CD4-positive, alpha-beta T cell (primary cell): ENCODE measurements at regions of chr13 and their contacts with region 1.

Region 1: DNA sequence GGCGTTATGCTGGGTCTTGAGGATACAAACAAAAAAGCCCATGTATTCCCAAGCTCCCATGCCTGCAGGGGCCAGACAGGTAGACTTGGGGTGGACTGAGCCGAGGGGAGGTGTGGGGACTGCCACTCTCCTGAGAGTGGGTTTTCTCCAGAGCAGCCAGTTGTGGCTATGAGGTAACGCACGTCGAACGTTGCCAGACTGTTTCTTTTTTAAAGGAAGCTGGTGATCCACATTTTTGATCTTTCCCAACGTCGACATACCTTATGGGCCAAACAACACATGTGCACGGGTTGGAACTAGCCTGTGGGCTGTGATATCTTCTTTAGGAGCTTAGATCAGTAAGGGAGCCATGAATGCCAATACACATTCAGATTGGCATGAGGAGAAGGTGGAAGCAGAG is 60.6 kb downstream of the LMO7 start:
- DNase-seq: no peak
- ATAC-seq: no peak
- H3K4me3 ChIP-seq: no peak overlapping the region
- H3K4me3 Mint-ChIP-seq: no peak overlapping the region
- H3K27ac ChIP-seq: no peak overlapping the region
- H3K27ac Mint-ChIP-seq: no peak overlapping the region
- H3K4me1 ChIP-seq: no peaks in the 10 kb centered on the region
- H3K4me1 Mint-ChIP-seq: no peaks in the 10 kb centered on the region
- H3K27me3 ChIP-seq: no peaks in the 10 kb centered on the region
- H3K27me3 Mint-ChIP-seq: no peaks in the 10 kb centered on the region
- CTCF ChIP-seq: no peak

Region 2: DNA sequence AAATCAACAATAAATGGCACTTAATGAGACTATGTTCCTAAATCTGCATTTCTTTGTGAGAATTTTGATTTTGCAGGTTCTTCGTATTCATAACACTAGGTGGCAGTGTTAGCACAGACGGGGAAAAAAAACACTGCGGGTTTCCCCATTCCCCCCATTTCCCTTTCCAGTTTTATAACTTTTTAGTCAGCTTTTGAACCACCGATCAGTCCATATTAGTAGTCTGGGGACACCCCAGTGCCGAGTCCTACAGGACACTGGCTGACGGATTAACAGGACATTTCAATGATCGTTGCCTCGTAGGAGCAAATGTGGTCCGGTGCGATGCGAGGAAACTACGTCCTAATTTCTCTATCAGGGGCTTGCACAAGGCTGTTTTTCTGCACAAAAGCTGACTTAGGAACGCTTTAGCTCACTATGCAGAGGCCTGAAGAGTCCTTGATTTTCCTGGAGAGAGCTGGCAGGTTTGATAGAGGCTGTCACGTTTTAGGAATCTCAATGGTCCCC is 173.7 kb after region 1 on chr13:
- CTCF ChIA-PET with region 1: interaction called, 13 read pairs
- POLR2A ChIA-PET with region 1: interaction called, 8 read pairs
- intact Hi-C with region 1: loop called (anchors 2 kb)
- DNase-seq: peak in 7 of 14 experiments; percentile 2 to 63 (median 39)
- ATAC-seq: peak; percentile 64
- H3K4me3 ChIP-seq: peak overlapping the region; percentile 44
- H3K4me3 Mint-ChIP-seq: peak overlapping the region; percentile 79
- H3K27ac ChIP-seq: peak overlapping the region; percentile 34 to 50
- H3K27ac Mint-ChIP-seq: peak overlapping the region; percentile 80
- H3K4me1 ChIP-seq: peaks cover 7% of the 10 kb centered on the region
- H3K4me1 Mint-ChIP-seq: peaks cover 17% of the 10 kb centered on the region
- H3K27me3 ChIP-seq: peaks cover 0 to 4% of the 10 kb centered on the region in 2 experiments
- H3K27me3 Mint-ChIP-seq: peaks cover 4% of the 10 kb centered on the region
- CTCF ChIP-seq: peak; percentile 86

Region 3: DNA sequence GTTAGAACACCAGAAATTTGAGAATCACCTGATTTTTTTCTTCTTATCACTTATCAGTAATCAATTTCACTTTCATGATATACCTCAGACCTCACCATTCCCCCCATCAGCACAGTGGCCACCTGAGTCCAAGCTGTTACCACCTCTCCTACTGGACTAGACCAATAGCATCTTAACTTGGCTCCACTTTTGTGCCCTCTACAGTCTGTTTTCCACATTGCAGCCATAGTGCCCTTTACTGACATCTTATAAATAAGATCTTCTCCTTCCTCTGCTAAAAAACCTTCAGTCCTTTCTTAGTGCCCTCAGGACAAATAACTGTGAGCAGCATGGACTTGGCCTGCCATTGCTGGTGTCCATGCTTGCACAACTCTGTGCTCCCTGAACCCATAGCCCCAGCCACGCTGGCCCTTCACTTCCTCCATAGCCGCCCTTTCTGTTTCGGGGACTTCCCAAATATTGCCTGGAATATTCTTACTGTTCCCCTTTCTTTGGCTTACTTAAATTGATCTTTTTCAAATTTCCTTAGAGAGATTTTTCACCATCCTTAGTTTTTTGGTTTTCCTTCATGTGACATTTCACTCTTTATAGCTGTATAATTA is 320.2 kb after region 1 on chr13:
- CTCF ChIA-PET with region 1: interaction called, 3 read pairs
- POLR2A ChIA-PET with region 1: no interaction called
- intact Hi-C with region 1: loop called (anchors 2 to 5 kb)
- DNase-seq: peak in 4 of 14 experiments; percentile 3 to 25 (median 13)
- ATAC-seq: no peak
- H3K4me3 ChIP-seq: no peak overlapping the region
- H3K4me3 Mint-ChIP-seq: no peak overlapping the region
- H3K27ac ChIP-seq: no peak overlapping the region
- H3K27ac Mint-ChIP-seq: no peak overlapping the region
- H3K4me1 ChIP-seq: no peaks in the 10 kb centered on the region
- H3K4me1 Mint-ChIP-seq: no peaks in the 10 kb centered on the region
- H3K27me3 ChIP-seq: no peaks in the 10 kb centered on the region
- H3K27me3 Mint-ChIP-seq: no peaks in the 10 kb centered on the region
- CTCF ChIP-seq: no peak

Region 4: GRCh38 chr13:76349700-76350099 is 653.0 kb after region 1 on chr13:
- CTCF ChIA-PET with region 1: no interaction called
- POLR2A ChIA-PET with region 1: no interaction called
- intact Hi-C with region 1: no loop called
- DNase-seq: no peak
- ATAC-seq: no peak
- H3K4me3 ChIP-seq: no peak overlapping the region
- H3K4me3 Mint-ChIP-seq: no peak overlapping the region
- H3K27ac ChIP-seq: no peak overlapping the region
- H3K27ac Mint-ChIP-seq: no peak overlapping the region
- H3K4me1 ChIP-seq: no peaks in the 10 kb centered on the region
- H3K4me1 Mint-ChIP-seq: no peaks in the 10 kb centered on the region
- H3K27me3 ChIP-seq: no peaks in the 10 kb centered on the region
- H3K27me3 Mint-ChIP-seq: peaks cover 4% of the 10 kb centered on the region
- CTCF ChIP-seq: no peak